ENCODE measurements at regions of chr20 and their contacts with region 1.

Region 1: GRCh38 chr20:33450867-33451266 is 7.3 kb upstream of the SNTA1 start:
- DNase-seq: peak; percentile 56
- ATAC-seq: peak; percentile 89
- H3K4me3 ChIP-seq: no peak overlapping the region
- H3K27ac ChIP-seq: 0 out of 2 replicates have a peak overlapping the region, but pooled peaks have one; percentile 41
- H3K4me1 ChIP-seq: peaks cover 7 to 33% of the 10 kb centered on the region in 2 experiments
- H3K27me3 ChIP-seq: no peaks in the 10 kb centered on the region
- CTCF ChIP-seq: no peak
- POLR2A ChIP-seq: no peak
- RAD21 ChIP-seq: no peak

Region 2: DNA sequence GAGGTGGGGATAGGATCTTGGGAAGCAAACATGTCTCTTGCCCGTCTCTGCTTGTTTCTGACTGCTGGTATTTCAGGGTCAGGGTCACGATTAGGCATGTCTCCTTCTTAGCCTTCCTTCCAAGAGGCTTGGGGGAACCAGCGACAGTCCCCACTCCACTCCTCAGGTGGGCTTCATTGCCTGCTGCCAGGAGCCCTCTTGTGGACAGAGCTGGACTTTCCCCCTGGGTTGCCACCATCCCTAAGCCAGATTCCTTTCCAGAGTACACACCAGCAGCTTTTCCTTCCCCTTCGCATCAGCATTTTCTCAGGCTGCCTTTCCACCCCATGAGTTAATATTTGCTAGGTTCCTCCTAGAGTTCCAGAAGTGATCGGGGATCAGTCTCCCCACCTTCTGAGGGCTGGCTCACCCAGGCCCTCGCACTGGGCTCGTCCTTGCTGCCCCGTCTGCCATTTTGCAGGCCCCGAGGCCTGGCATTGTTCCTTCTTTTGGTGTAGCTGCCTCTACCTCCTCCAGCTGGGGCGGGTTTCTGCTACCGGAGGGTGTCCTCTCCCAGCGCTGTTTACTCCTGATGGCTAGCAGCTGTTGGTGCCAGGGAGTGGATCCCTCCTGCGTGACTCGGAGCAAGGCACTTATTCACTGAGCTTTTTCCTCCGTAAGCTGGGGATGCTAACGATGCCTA is 202.5 kb after region 1 on chr20:
- CTCF ChIA-PET with region 1: no interaction called
- POLR2A ChIA-PET with region 1: no interaction called
- RAD21 ChIA-PET with region 1: no interaction called
- intact Hi-C with region 1: loop called (anchors 2 kb)
- DNase-seq: peak; percentile 35
- ATAC-seq: peak; percentile 76
- H3K4me3 ChIP-seq: no peak overlapping the region
- H3K27ac ChIP-seq: no peak overlapping the region
- H3K4me1 ChIP-seq: peaks cover 0 to 16% of the 10 kb centered on the region in 2 experiments; a peak in 1 of 4 replicates
- H3K27me3 ChIP-seq: no peaks in the 10 kb centered on the region
- CTCF ChIP-seq: peak; percentile 75 to 92 (median 78)
- POLR2A ChIP-seq: no peak
- RAD21 ChIP-seq: peak; percentile 89

Region 3: GRCh38 chr20:33731693-33732165 is 280.9 kb after region 1 on chr20 and contains the start of gene ZNF341:
- CTCF ChIA-PET with region 1: no interaction called
- POLR2A ChIA-PET with region 1: no interaction called
- RAD21 ChIA-PET with region 1: no interaction called
- intact Hi-C with region 1: loop called (anchors 2 kb)
- DNase-seq: peak; percentile 39
- ATAC-seq: peak; percentile 74
- H3K4me3 ChIP-seq: peak within 1 kb of the TSS; percentile 64 to 81
- H3K27ac ChIP-seq: peak within 1 kb of the TSS; percentile 83
- H3K4me1 ChIP-seq: peaks cover 23 to 30% of the 10 kb centered on the region in 2 experiments
- H3K27me3 ChIP-seq: no peaks in the 10 kb centered on the region
- CTCF ChIP-seq: peak; percentile 52 to 82 (median 68); a peak in 5 of 6 replicates
- POLR2A ChIP-seq: no peak
- RAD21 ChIP-seq: peak; percentile 78
- total RNA-seq, gene ZNF341: 4.9 TPM